OCI-LY7 (cell line): ENCODE measurements at regions of chr6 and their contacts with region 1.

Region 1: GRCh38 chr6:31862344-31863227 is at the start of gene NEU1:
- DNase-seq: peak; percentile 100
- H3K4me3 ChIP-seq: peak within 1 kb of the TSS; percentile 75
- H3K27ac ChIP-seq: peak within 1 kb of the TSS; percentile 74
- H3K4me1 ChIP-seq: peaks cover 20% of the 10 kb centered on the region
- CTCF ChIP-seq: no peak
- total RNA-seq, gene NEU1: 5.5 and 7.0 TPM in 2 replicates

Region 2: GRCh38 chr6:31795616-31796298 is 66.8 kb before region 1 on chr6 and contains the start of gene VARS1:
- CTCF ChIA-PET with region 1: no interaction called
- POLR2A ChIA-PET with region 1: no interaction called
- intact Hi-C with region 1: loop called (anchors 2 kb)
- DNase-seq: peak; percentile 92
- H3K4me3 ChIP-seq: peak within 1 kb of the TSS; percentile 90
- H3K27ac ChIP-seq: peak within 1 kb of the TSS; percentile 71
- H3K4me1 ChIP-seq: peaks cover 49% of the 10 kb centered on the region
- CTCF ChIP-seq: peak; percentile 74
- total RNA-seq, gene VARS1: 47.0 and 51.2 TPM in 2 replicates